SK-N-SH (cell line): ENCODE measurements at regions of chr21 and their contacts with region 1.

Region 1: DNA sequence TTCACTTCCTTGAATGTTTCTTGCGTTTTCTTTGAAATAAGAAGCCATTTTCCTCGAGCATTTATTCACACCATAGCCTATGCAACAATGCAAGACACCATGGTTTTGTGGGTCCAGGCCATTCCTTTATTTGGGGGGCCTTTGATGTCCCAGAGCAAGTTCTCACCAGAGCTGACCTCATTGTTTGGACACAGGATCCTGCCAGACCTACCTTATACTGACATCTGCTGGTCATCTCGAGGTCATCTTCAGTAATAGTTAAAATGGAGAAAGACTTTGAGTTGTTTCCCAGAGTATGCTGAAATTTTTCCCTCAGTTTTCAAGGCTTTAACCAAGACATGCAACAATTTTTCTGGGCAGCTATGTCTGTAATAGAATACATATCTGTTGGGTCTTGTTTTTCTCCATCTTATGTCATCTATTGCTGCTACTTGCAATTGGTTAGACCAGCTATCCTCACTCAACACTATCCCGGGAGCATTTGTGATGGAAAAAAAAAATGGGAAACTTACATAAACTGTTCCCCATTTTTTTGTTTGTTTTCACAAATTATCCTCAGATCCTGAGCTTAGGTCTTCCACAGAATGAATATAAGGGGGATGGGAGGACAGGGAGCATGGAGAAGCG is 34.0 kb upstream of the BACE2 start:
- DNase-seq: peak; percentile 61
- H3K4me3 ChIP-seq: peak overlapping the region in 1 of 2 experiments; percentile 4; a peak in 1 of 4 replicates
- H3K27ac ChIP-seq: no peak overlapping the region
- H3K4me1 ChIP-seq: no peaks in the 10 kb centered on the region
- H3K27me3 ChIP-seq: no peaks in the 10 kb centered on the region
- CTCF ChIP-seq: peak; percentile 64
- EP300 ChIP-seq: no peak
- RAD21 ChIP-seq: peak; percentile 62

Region 2: DNA sequence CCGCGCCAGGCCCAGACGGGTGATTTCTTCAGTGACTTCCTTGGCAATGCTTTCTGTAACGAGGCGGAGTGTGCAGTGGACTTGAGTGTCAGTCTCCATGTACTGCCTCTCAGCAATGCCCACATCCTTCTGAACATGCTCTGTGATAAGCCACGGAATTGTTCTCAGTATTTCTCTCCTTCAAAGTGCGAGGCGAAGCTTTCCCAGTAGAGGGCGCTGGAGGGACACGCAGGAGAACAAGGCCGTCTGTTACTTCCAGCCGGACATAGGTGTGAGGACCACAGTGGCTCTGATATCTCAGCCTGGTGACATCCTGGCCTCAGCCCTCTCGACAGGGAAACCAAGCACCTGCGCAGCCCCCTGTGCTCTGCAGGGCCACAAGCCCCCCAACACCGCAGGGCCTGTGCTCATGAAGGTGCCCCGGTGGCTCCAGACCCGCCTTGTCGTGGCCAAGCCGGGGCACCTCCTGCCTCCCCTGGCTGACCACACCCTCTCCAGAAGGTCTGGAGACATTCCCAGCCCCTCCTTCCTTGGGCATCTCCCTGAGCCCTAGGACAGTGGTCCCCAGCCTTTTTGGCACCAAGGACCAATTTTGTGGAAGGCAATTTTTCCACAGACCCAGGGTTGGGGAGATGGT is 12.1 kb before region 1 on chr21:
- CTCF ChIA-PET with region 1: interaction called, 105 read pairs
- POLR2A ChIA-PET with region 1: no interaction called
- DNase-seq: peak; percentile 61
- H3K4me3 ChIP-seq: no peak overlapping the region
- H3K27ac ChIP-seq: no peak overlapping the region
- H3K4me1 ChIP-seq: no peaks in the 10 kb centered on the region
- H3K27me3 ChIP-seq: 0 out of 2 replicates have a peak, but pooled peaks cover 6% of the 10 kb centered on the region
- CTCF ChIP-seq: peak; percentile 71
- EP300 ChIP-seq: no peak
- RAD21 ChIP-seq: peak; percentile 68

Region 3: DNA sequence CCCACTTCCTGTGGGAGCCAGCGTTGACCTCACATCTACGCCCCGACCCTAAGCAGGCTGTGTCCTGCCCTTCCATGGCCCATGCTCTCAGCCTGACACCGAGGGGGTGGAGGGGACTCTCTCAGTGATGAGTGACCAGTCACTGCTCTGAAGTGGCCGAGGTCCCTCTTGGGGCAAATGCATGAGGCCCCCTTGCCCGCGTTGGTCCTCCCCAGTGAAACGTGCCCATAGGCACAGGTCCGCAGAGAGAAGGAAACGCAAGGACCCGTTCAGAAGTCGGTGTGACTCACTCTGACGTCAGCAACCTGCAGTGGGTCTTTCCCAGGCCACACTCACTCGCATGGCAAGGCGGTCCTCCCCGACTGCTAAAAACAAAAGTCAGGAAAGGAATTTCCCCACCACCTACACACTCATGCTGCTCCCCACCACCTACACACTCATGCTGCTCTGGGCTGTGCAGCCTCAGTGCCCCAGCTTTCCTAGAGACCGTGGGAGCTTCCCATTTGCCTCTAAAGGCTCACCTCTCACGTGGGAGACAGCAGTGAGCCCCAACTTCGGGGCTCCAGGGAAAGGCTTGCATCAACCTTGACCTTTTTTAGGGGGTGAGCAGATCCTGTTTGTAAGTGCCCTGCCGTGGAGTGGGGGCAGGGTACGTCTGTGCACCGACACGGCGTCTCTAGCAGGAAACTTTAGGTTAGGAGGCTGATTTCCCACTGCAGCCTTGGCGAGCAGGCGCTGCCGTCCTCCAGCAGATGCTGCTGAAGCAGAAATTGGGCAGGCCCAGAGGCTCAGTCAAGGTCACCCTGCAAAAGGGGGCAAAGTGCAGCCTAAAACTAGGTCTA is 1281.1 kb after region 1 on chr21:
- CTCF ChIA-PET with region 1: no interaction called
- POLR2A ChIA-PET with region 1: no interaction called
- DNase-seq: no peak
- H3K4me3 ChIP-seq: no peak overlapping the region
- H3K27ac ChIP-seq: no peak overlapping the region
- H3K4me1 ChIP-seq: no peaks in the 10 kb centered on the region
- H3K27me3 ChIP-seq: no peaks in the 10 kb centered on the region
- CTCF ChIP-seq: no peak
- EP300 ChIP-seq: no peak
- RAD21 ChIP-seq: no peak